Panc1 (cell line): ENCODE measurements at regions of chr2 and their contacts with region 1.

Region 1: GRCh38 chr2:218395797-218396687 is 3.6 kb upstream of the CTDSP1 start:
- DNase-seq: no peak
- ATAC-seq: peak; percentile 70
- H3K4me3 ChIP-seq: peak overlapping the region; percentile 72 to 76
- H3K27ac ChIP-seq: peak overlapping the region; percentile 99
- H3K4me1 ChIP-seq: peaks cover 25% of the 10 kb centered on the region
- H3K27me3 ChIP-seq: no peaks in the 10 kb centered on the region
- CTCF ChIP-seq: peak; percentile 97

Region 2: GRCh38 chr2:218301176-218301819 is 94.7 kb before region 1 on chr2:
- CTCF ChIA-PET with region 1: interaction called, 7 read pairs
- POLR2A ChIA-PET with region 1: interaction called, 4 read pairs
- in situ Hi-C with region 1: no loop called
- intact Hi-C with region 1: loop called (anchors 2 kb)
- DNase-seq: peak; percentile 83
- ATAC-seq: peak; percentile 87
- H3K4me3 ChIP-seq: no peak overlapping the region
- H3K27ac ChIP-seq: no peak overlapping the region; the same call in 1 of the 2 replicates
- H3K4me1 ChIP-seq: peaks cover 10% of the 10 kb centered on the region
- H3K27me3 ChIP-seq: no peaks in the 10 kb centered on the region
- CTCF ChIP-seq: peak; percentile 94

Region 3: GRCh38 chr2:218425531-218425930 is 29.5 kb after region 1 on chr2:
- CTCF ChIA-PET with region 1: no interaction called
- POLR2A ChIA-PET with region 1: no interaction called
- in situ Hi-C with region 1: no loop called
- intact Hi-C with region 1: no loop called
- DNase-seq: no peak
- ATAC-seq: no peak
- H3K4me3 ChIP-seq: no peak overlapping the region
- H3K27ac ChIP-seq: no peak overlapping the region
- H3K4me1 ChIP-seq: no peaks in the 10 kb centered on the region
- H3K27me3 ChIP-seq: no peaks in the 10 kb centered on the region
- CTCF ChIP-seq: no peak